Vagina (tissue), 2 donors: ENCODE measurements at regions of chr11 and their contacts with region 1.

Region 1: GRCh38 chr11:113730887-113731726 is 25.0 kb upstream of the TMPRSS5 start:
- DNase-seq: no peak
- H3K4me3 ChIP-seq: no peak overlapping the region
- H3K27ac ChIP-seq: no peak overlapping the region
- H3K4me1 ChIP-seq: no peaks in the 10 kb centered on the region
- H3K27me3 ChIP-seq: no peaks in the 10 kb centered on the region
- CTCF ChIP-seq: peak in 1 of 3 experiments; percentile 36
- POLR2A ChIP-seq: no peak

Region 2: DNA sequence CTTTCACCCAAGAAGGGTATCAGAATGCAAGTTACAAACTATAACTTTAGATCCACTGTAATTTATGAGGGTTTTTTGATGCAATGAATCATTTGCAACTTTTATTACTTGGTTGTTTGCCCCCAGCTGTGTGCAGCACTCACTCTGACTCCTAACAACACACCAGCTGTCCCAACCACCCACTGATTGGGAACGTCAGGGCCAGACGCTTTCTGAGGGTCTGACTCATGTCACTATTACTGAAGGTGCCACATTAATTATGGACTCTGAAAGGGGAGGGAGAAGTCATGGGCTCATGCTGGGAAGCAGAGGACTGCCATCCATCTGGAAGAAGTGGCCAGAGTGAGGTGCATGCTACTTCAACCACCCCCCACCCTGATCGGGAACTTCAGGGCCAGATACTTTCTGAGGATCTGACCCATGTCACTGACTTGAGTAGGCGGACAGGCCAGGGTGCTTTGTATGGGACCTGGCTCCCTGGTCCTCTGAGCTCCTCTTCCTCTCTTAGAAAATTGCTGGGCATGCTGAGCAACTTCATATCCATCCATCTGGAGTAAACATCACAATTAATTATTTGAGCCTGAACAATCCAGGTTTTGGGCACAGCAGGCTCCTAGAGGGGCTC is 211.0 kb before region 1 on chr11:
- intact Hi-C with region 1: no loop called
- DNase-seq: peak; percentile 54 to 55
- H3K4me3 ChIP-seq: no peak overlapping the region
- H3K27ac ChIP-seq: no peak overlapping the region
- H3K4me1 ChIP-seq: no peaks in the 10 kb centered on the region
- H3K27me3 ChIP-seq: no peaks in the 10 kb centered on the region
- CTCF ChIP-seq: no peak
- POLR2A ChIP-seq: no peak

Region 3: GRCh38 chr11:113773416-113774173 is 42.5 kb after region 1 on chr11 and contains the start of gene ZW10:
- intact Hi-C with region 1: no loop called
- DNase-seq: peak in 1 of 2 donors; percentile 92
- H3K4me3 ChIP-seq: peak within 1 kb of the TSS; percentile 70 to 76
- H3K27ac ChIP-seq: peak within 1 kb of the TSS; percentile 84
- H3K4me1 ChIP-seq: peaks cover 20% of the 10 kb centered on the region
- H3K27me3 ChIP-seq: no peaks in the 10 kb centered on the region
- CTCF ChIP-seq: peak in 2 of 3 experiments; percentile 63 to 76
- POLR2A ChIP-seq: no peak
- total RNA-seq, gene ZW10: 14.7 TPM

Region 4: GRCh38 chr11:113796663-113797259 is 65.7 kb after region 1 on chr11:
- intact Hi-C with region 1: loop called (anchors 5 kb)
- DNase-seq: no peak
- H3K4me3 ChIP-seq: no peak overlapping the region
- H3K27ac ChIP-seq: no peak overlapping the region
- H3K4me1 ChIP-seq: no peaks in the 10 kb centered on the region
- H3K27me3 ChIP-seq: no peaks in the 10 kb centered on the region
- CTCF ChIP-seq: peak in 2 of 3 experiments; percentile 41 to 45
- POLR2A ChIP-seq: no peak